Activated naive CD4-positive, alpha-beta T cell treated with anti-CD3 and anti-CD28 coated beads, Interleukin-2, amount 10 ng/mL, durations not matched to agents 7 days and 5 days (primary cell): ENCODE measurements at regions of chr1 and their contacts with region 1.

Region 1: GRCh38 chr1:46477153-46477929 is 12.3 kb upstream of the DMBX1 start:
- DNase-seq: peak; percentile 83
- H3K4me3 Mint-ChIP-seq: no peak overlapping the region
- H3K27ac Mint-ChIP-seq: no peak overlapping the region
- H3K4me1 Mint-ChIP-seq: no peaks in the 10 kb centered on the region
- H3K27me3 Mint-ChIP-seq: peaks cover 78% of the 10 kb centered on the region

Region 2: DNA sequence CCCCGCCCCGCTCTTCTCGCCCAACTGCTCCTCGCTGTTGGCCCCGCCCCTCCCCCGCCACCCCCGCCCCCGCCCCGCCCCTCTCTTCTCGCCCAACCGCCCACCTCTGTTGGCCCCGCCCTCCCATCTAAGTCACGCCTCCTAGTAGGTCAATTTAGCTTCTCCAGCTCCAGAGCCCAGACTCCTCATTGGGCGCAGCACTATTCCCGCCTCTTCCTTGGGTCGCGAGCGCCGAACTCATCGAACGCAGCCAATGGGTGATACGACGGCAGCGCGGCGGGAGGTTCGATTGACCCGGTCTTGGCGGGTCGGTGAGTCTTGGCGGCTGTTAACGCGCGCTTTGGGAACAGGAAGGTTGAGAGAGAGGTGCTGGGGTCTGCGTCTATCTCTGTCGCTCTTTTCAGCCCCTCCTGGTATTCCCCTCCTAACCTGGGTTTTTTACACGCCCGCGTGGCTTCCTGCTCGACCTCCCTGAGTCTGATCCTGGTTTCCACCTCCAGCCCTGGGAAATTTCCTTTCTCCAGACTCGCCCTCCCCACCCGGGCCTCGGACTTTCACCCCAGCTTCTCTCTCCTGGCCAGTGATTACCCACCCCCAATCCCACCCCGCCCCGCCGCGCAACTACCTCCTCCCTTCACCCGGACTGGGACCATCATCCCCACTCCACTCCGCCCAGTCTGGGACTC is 229.8 kb before region 1 on chr1 and contains the start of gene RAD54L:
- CTCF ChIA-PET with region 1: no interaction called
- DNase-seq: peak; percentile 98
- H3K4me3 Mint-ChIP-seq: peak within 1 kb of the TSS; percentile 96
- H3K27ac Mint-ChIP-seq: peak within 1 kb of the TSS; percentile 88
- H3K4me1 Mint-ChIP-seq: peaks cover 47% of the 10 kb centered on the region
- H3K27me3 Mint-ChIP-seq: peaks cover 5% of the 10 kb centered on the region

Region 3: GRCh38 chr1:46442317-46443161 is 34.8 kb before region 1 on chr1:
- CTCF ChIA-PET with region 1: interaction called, 12 read pairs
- DNase-seq: peak; percentile 76
- H3K4me3 Mint-ChIP-seq: peak overlapping the region; percentile 76
- H3K27ac Mint-ChIP-seq: no peak overlapping the region
- H3K4me1 Mint-ChIP-seq: peaks cover 9% of the 10 kb centered on the region
- H3K27me3 Mint-ChIP-seq: peaks cover 76% of the 10 kb centered on the region

Region 4: GRCh38 chr1:46487818-46488218 is 10.5 kb after region 1 on chr1:
- CTCF ChIA-PET with region 1: interaction called, 10 read pairs
- DNase-seq: peak; percentile 39
- H3K4me3 Mint-ChIP-seq: no peak overlapping the region
- H3K27ac Mint-ChIP-seq: no peak overlapping the region
- H3K4me1 Mint-ChIP-seq: peaks cover 15% of the 10 kb centered on the region
- H3K27me3 Mint-ChIP-seq: peaks cover 100% of the 10 kb centered on the region

Region 5: GRCh38 chr1:46522184-46522968 is 45.0 kb after region 1 on chr1:
- CTCF ChIA-PET with region 1: interaction called, 76 read pairs
- DNase-seq: no peak
- H3K4me3 Mint-ChIP-seq: no peak overlapping the region
- H3K27ac Mint-ChIP-seq: no peak overlapping the region
- H3K4me1 Mint-ChIP-seq: peaks cover 13% of the 10 kb centered on the region
- H3K27me3 Mint-ChIP-seq: peaks cover 78% of the 10 kb centered on the region